ENCODE measurements at regions of chr10 and their contacts with region 1.

Region 1: DNA sequence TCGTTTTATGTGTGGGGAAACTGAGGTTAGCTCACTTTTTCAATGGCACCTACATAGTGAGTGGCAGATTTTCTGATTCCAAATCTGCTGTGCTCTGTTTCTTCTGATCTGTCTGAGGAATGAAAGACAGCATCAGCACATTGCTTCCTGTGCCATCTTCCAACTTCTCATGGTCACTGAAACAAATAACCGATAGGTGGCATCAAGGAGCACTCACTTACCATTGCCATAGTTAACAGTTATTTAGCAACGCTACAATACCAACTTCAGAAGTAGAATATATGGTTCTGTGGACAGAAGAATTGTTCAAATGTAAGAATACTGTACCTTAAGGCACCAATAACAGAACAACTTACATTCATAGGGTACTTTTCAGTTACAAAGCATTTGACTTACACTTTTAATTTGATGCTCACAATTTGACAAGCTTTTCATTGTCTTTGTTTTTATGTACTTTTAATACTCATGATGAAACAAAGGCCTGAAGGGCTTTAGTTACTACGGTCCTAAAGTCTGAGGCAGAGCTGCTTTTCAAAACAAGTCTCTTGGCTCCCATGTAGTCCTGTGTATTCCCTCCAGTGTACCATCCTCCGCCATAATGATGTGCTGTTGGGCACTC is 228.9 kb upstream of the TCF7L2 start:
- DNase-seq: peak in 4 of 7 donors; percentile 15 to 50 (median 34)
- H3K4me3 ChIP-seq: no peak overlapping the region
- H3K27ac ChIP-seq: no peak overlapping the region
- H3K4me1 ChIP-seq: no peaks in the 10 kb centered on the region
- H3K27me3 ChIP-seq: no peaks in the 10 kb centered on the region
- CTCF ChIP-seq: peak; percentile 49 to 77 (median 70)
- POLR2A ChIP-seq: no peak

Region 2: DNA sequence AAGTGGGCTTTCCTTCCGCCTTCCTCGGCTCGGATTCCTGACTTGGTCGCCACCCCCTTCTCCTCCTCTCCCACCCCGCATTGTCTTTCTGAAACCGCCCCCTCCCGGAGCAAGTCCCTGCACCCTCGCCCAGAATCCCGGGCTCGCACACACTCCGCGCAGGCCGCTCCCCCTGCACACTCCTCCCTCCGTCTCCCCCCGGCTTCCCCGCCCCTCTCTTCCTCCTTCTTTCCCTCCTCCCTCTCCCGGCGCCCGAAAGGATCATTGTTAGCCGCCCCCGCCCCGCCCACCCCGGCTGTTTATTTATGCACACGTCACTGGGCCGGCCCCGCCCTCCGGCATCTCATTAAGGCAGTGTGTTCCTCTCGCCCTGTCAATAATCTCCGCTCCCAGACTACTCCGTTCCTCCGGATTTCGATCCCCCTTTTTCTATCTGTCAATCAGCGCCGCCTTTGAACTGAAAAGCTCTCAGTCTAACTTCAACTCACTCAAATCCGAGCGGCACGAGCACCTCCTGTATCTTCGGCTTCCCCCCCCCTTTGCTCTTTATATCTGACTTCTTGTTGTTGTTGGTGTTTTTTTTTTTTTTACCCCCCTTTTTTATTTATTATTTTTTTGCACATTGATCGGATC is 228.8 kb after region 1 on chr10 and contains the start of gene TCF7L2:
- intact Hi-C with region 1: loop called in 1 of 2 experiments (anchors 10 kb)
- DNase-seq: peak; percentile 94 to 98 (median 97)
- H3K4me3 ChIP-seq: peak within 1 kb of the TSS in 3 of 4 donors; percentile 50 to 83 (median 77)
- H3K27ac ChIP-seq: peak within 1 kb of the TSS; percentile 52 to 97 (median 88)
- H3K4me1 ChIP-seq: peaks cover 12 to 29% of the 10 kb centered on the region in 2 donors
- H3K27me3 ChIP-seq: no peaks in the 10 kb centered on the region
- CTCF ChIP-seq: no peak
- POLR2A ChIP-seq: peak in 1 of 2 donors; percentile 84
- total RNA-seq, gene TCF7L2: 8.7 to 24.7 (median 13.0) TPM

Region 3: GRCh38 chr10:113126229-113127201 is 405.3 kb after region 1 on chr10:
- intact Hi-C with region 1: loop called (anchors 10 kb)
- DNase-seq: peak; percentile 61 to 81 (median 74)
- H3K4me3 ChIP-seq: peak overlapping the region in 1 of 4 donors; percentile 58
- H3K27ac ChIP-seq: no peak overlapping the region
- H3K4me1 ChIP-seq: peaks cover 0 to 25% of the 10 kb centered on the region in 2 donors
- H3K27me3 ChIP-seq: no peaks in the 10 kb centered on the region
- CTCF ChIP-seq: peak in 3 of 6 experiments; percentile 80 to 94 (median 91)
- POLR2A ChIP-seq: no peak

Region 4: GRCh38 chr10:113139699-113140098 is 418.5 kb after region 1 on chr10:
- intact Hi-C with region 1: loop called in 1 of 2 experiments (anchors 10 kb)
- DNase-seq: no peak
- H3K4me3 ChIP-seq: no peak overlapping the region
- H3K27ac ChIP-seq: no peak overlapping the region
- H3K4me1 ChIP-seq: peaks cover 0 to 9% of the 10 kb centered on the region in 2 donors
- H3K27me3 ChIP-seq: no peaks in the 10 kb centered on the region
- CTCF ChIP-seq: peak in 2 of 6 experiments; percentile 10 to 16
- POLR2A ChIP-seq: no peak

Region 5: GRCh38 chr10:113385021-113385999 is 664.1 kb after region 1 on chr10:
- intact Hi-C with region 1: loop called in 1 of 2 experiments (anchors 10 kb)
- DNase-seq: peak; percentile 81 to 94 (median 88)
- H3K4me3 ChIP-seq: no peak overlapping the region
- H3K27ac ChIP-seq: peak overlapping the region in 2 of 5 donors; percentile 22 to 41
- H3K4me1 ChIP-seq: peaks cover 6 to 33% of the 10 kb centered on the region in 2 donors
- H3K27me3 ChIP-seq: no peaks in the 10 kb centered on the region
- CTCF ChIP-seq: peak; percentile 62 to 92 (median 86)
- POLR2A ChIP-seq: no peak